ENCODE measurements at regions of chr1 and their contacts with region 1.

Region 1: GRCh38 chr1:202968840-202969295 is 1.8 kb upstream of the CYB5R1 start:
- DNase-seq: peak; percentile 52
- H3K4me3 Mint-ChIP-seq: no peak overlapping the region
- H3K27ac Mint-ChIP-seq: peak overlapping the region; percentile 95
- H3K4me1 Mint-ChIP-seq: peaks cover 37% of the 10 kb centered on the region
- H3K27me3 Mint-ChIP-seq: peaks cover 7% of the 10 kb centered on the region

Region 2: DNA sequence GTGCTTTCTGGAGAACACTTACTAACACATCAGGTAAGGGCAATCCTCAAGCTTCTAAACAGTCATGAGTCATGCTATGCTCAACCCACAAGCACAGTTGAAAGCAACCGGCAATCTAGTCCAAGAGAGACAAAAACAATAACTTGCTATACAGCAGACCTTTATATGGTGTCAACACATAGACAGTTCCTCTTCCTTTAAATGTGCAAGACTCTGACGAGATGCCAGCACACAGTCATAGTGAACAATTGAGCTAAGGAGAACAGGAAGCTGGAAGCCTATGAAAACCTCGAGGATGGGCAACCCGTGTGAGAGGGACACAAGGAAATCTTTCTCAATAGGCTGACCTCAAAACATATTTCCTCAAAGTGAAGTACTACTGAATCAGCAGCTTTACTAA is 16.1 kb before region 1 on chr1:
- CTCF ChIA-PET with region 1: interaction called, 10 read pairs
- DNase-seq: no peak
- H3K4me3 Mint-ChIP-seq: no peak overlapping the region
- H3K27ac Mint-ChIP-seq: peak overlapping the region; percentile 66
- H3K4me1 Mint-ChIP-seq: peaks cover 59% of the 10 kb centered on the region
- H3K27me3 Mint-ChIP-seq: no peaks in the 10 kb centered on the region

Region 3: DNA sequence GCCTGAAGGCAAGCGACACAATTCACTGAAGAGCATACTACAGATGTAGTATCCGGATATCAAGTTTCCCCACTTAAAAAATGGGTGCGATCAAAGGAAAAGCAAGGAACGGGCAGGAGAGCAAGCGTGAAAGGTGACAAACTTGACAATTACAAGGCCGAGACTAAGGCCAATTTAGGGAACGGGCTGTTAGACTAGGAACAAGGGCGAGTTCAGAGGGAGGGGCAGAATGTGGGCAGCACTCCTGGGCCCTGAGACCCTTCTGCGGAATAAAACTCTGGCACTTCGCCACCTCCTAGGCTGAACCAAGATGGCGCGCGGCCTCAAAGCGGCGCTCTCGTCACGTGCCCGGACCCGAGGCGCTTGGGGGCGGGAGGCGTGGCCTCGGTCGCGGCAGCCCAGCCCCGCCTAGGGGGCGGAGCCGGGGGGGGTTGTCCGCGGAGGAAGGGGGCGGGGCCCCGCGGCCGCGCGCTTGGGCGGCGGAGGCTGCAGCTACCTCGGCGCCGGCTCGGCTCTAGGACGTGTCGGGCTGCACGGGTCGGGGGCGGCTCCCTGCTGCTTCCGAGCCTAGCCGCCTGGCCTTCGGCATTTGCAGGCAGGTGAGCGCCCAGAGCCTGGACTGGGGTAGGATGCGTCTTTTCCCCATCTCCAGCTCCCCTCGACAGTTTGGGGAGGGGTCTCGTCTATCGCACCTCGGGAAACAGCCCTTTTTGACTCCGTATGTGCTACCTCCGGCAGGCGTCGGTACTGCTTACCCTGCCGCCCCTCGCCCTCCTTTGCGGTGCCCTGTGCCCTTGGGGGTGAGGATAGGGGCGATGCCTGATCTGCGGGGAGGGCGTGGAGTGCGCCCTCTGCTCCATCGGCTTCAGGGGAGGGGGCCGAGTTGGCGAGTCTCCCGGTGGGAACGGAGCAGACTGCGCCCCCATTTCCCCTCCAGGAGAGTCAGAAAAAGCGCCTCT is 57.4 kb after region 1 on chr1 and contains the start of gene PPFIA4:
- CTCF ChIA-PET with region 1: no interaction called
- DNase-seq: peak; percentile 90
- H3K4me3 Mint-ChIP-seq: peak within 1 kb of the TSS; percentile 86
- H3K27ac Mint-ChIP-seq: peak within 1 kb of the TSS; percentile 70
- H3K4me1 Mint-ChIP-seq: peaks cover 21% of the 10 kb centered on the region
- H3K27me3 Mint-ChIP-seq: peaks cover 23% of the 10 kb centered on the region

Measured in activated naive CD4-positive, alpha-beta T cell treated with anti-CD3 and anti-CD28 coated beads, Interleukin-2, amount 10 ng/mL, durations not matched to agents 7 days and 5 days (primary cell).